Stomach (tissue), 19 donors: ENCODE measurements at regions of chr6 and their contacts with region 1.

Region 1: DNA sequence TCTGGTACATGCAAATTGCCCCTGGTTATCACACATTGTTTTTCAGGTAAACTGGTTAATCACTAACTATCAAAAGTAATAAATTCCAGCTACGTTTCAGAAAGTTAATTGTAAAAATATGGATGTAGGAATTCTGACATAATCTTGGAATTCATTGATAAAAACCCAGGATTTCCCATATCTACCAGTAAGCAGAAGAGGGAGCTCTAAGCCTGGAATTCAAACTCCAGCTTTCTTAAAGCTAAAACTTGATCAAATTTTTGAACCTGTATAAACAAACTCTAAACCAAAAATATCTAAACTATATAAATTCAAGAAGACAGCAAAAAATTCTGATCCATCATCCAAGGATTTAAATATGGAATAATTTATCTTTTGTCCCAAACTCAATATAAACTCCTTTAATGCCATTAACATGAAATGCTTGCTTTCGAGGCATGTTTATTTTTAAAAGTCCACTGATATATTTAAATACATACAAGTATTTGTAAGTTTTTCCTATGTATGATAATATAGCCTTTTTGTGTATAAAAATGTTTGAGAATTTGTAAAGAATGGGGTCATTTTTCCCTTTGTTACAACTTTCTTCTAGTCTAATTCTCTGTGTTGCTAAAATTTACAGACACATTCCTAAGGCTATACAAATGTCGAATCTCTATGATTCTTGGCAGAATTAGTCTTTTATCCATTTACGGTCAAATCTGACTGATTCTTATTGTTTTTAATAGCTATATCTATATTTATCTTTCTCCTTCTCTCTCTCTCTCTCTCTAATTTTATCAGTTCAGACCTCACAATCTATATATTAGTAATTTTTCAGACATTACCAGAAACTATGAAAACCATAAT is 91.4 kb upstream of the RNF217 start:
- DNase-seq: peak in 1 of 2 donors; percentile 60
- H3K4me3 ChIP-seq: no peak overlapping the region
- H3K27ac ChIP-seq: no peak overlapping the region
- H3K4me1 ChIP-seq: no peaks in the 10 kb centered on the region
- H3K27me3 ChIP-seq: no peaks in the 10 kb centered on the region
- CTCF ChIP-seq: peak in 5 of 7 experiments; percentile 46 to 62 (median 58)
- EP300 ChIP-seq: no peak
- POLR2A ChIP-seq: no peak

Region 2: GRCh38 chr6:124495665-124496190 is 375.1 kb before region 1 on chr6:
- intact Hi-C with region 1: no loop called
- DNase-seq: no peak
- H3K4me3 ChIP-seq: no peak overlapping the region
- H3K27ac ChIP-seq: no peak overlapping the region
- H3K4me1 ChIP-seq: no peaks in the 10 kb centered on the region
- H3K27me3 ChIP-seq: no peaks in the 10 kb centered on the region
- CTCF ChIP-seq: no peak
- EP300 ChIP-seq: no peak
- POLR2A ChIP-seq: no peak

Region 3: DNA sequence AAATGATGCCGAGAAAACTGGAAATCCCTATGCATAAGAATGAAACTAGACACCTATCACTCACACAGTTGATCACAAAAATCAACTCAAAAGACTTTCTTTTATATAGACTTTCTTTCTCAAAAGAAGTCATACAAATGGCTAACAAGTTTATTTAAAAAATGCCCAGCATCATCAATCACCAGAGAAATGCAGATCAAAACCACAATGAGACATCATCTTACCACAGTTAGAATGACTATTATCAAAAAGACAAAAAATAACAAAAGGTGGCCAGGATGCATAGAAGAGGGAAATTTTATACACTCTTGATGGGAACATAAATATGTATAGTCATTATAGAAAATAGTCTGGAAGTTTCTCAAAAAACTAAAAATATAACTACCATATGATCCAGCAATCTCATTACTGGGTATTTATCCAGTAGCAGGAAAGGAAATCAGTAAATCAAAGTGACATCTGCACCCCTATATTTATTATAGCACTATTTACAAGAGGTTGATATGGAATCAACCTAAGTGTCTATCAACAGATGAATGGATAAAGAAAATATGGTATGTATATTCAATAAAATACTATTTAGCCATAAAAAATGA is 88.0 kb after region 1 on chr6:
- intact Hi-C with region 1: loop called (anchors 10 kb)
- DNase-seq: no peak
- H3K4me3 ChIP-seq: no peak overlapping the region
- H3K27ac ChIP-seq: no peak overlapping the region
- H3K4me1 ChIP-seq: peaks cover 0 to 18% (median 6%) of the 10 kb centered on the region in 4 donors
- H3K27me3 ChIP-seq: no peaks in the 10 kb centered on the region
- CTCF ChIP-seq: no peak
- EP300 ChIP-seq: no peak
- POLR2A ChIP-seq: no peak

Region 4: DNA sequence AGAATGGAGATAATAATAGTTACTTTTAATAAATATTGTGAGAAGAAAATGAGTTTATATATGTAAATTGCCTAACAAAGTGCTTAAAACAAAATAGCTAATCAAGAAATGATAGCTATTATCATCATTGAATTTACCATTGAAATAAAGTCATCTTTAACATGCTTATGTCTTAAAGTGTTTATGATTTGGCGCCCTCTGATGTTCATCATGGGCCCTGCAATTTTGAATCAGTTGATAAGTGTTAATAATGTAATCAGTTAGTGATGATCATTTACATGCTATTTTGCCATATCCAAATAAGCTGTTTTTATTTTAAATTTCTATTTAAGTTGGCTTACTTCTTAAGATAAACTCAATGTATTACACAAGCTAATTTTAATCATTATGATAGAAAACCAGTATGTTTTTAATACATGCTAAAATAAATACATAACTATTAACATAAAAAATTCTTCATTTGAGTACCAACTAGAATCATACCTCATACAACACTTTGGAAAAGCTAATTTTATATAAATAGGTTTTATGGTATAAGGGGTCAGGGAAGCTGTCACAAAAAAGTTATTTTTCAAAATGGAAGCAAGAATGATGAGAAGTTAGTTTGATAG is 243.5 kb after region 1 on chr6:
- intact Hi-C with region 1: loop called (anchors 5 kb)
- DNase-seq: peak; percentile 68 to 75
- H3K4me3 ChIP-seq: no peak overlapping the region
- H3K27ac ChIP-seq: no peak overlapping the region
- H3K4me1 ChIP-seq: no peaks in the 10 kb centered on the region
- H3K27me3 ChIP-seq: no peaks in the 10 kb centered on the region
- CTCF ChIP-seq: peak in 5 of 7 experiments; percentile 59 to 79 (median 69)
- EP300 ChIP-seq: no peak
- POLR2A ChIP-seq: no peak